Activated CD4-positive, alpha-beta T cell treated with anti-CD3 and anti-CD28 coated beads, Interleukin-2, amount 10 ng/mL, durations not matched to agents 24 days and 14 days (primary cell): ENCODE measurements at regions of chr13 and their contacts with region 1.

Region 1: DNA sequence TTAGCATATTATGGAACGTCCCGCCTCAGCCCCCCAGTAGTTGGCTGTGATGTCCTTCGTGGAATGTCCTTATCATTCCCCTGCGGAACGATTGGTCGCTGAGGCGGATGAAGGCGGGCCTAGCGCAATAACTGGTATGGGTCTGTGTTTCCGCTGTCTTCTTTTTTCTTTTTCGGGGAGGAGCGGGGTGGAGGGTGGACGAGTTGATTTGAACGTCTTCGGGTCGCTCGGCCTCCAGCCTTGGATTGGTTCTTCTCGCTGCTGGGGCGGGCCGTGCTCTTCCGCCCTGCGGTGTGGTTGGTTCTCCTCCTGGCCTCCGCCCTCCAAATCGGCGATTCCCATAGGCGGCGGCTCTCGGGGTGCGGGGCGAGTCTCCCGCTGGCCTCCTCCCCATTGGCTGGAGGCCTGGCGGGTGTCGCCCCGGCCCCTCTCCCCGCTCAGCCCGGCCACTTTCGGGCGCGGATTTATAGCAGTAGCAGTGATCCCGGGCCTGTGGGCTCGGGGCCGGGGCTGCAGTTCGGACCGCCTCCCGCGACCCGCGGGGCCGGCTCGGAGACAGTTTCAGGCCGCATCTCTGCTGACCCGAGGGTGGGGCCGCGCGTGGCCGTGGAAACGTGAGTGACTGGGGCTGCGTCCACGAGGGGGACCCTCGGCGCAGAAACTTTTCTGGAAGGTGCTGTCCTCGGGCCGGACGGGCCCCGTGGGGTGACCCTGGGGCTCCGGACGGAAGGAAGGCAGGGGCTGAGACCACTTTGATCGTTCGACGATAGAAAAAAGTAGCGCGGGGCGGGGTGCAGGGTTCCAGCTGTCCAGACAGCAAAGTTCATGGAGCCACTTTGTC is 2.1 kb downstream of the ING1 start:
- DNase-seq: peak; percentile 98
- H3K4me3 Mint-ChIP-seq: peak overlapping the region; percentile 96
- H3K27ac Mint-ChIP-seq: peak overlapping the region; percentile 95
- H3K4me1 Mint-ChIP-seq: peaks cover 29% of the 10 kb centered on the region
- H3K27me3 Mint-ChIP-seq: peaks cover 2% of the 10 kb centered on the region

Region 2: GRCh38 chr13:110561344-110562035 is 154.1 kb before region 1 on chr13 and contains the start of gene RAB20:
- intact Hi-C with region 1: loop called (anchors 5 kb)
- DNase-seq: peak; percentile 91
- H3K4me3 Mint-ChIP-seq: peak within 1 kb of the TSS; percentile 87
- H3K27ac Mint-ChIP-seq: peak within 1 kb of the TSS; percentile 82
- H3K4me1 Mint-ChIP-seq: peaks cover 26% of the 10 kb centered on the region
- H3K27me3 Mint-ChIP-seq: peaks cover 38% of the 10 kb centered on the region
- total RNA-seq, gene RAB20: 2.8 and 3.2 TPM in 2 replicates

Region 3: DNA sequence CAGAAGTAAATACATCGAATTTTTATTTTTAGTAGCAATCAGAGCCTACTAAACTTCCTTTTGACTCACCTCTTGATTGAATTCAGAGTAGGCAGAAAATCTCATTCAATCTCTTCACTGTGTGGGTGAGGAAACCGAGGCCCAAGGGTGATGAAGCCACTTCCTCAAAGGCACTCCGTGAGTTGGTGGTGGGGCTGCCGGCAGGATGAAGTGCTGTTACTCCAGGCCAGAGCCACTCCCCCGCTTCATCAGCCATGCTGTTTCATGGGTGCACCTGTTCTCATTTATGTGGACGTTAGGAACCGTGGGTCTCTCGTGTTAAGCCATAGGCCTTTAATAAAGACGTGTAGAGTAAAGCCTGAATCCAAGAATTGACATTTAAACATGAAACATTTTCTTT is 11.1 kb after region 1 on chr13:
- intact Hi-C with region 1: loop called (anchors 1 kb)
- DNase-seq: peak; percentile 81
- H3K4me3 Mint-ChIP-seq: peak overlapping the region; percentile 26
- H3K27ac Mint-ChIP-seq: peak overlapping the region; percentile 56
- H3K4me1 Mint-ChIP-seq: peaks cover 10% of the 10 kb centered on the region
- H3K27me3 Mint-ChIP-seq: no peaks in the 10 kb centered on the region